Activated T-helper 2 cell treated with anti-CD3 and anti-CD28 coated beads, Interferon-gamma antibody, Interleukin-2, Interleukin-4, amounts not matched to agents 10 μg/mL and 5 μg/mL and 100 μg/mL, durations not matched to agents 14 hours and 24 hours and 36 hours (primary cell): ENCODE measurements at regions of chr11 and their contacts with region 1.

Region 1: GRCh38 chr11:42913731-42914130 is 398.1 kb upstream of the API5 start:
- DNase-seq: no peak
- H3K4me3 Mint-ChIP-seq: no peak overlapping the region
- H3K27ac Mint-ChIP-seq: no peak overlapping the region
- H3K4me1 Mint-ChIP-seq: no peaks in the 10 kb centered on the region
- H3K27me3 Mint-ChIP-seq: no peaks in the 10 kb centered on the region

Region 2: GRCh38 chr11:43072096-43072495 is 158.4 kb after region 1 on chr11:
- intact Hi-C with region 1: loop called (anchors 5 kb)
- DNase-seq: no peak
- H3K4me3 Mint-ChIP-seq: no peak overlapping the region
- H3K27ac Mint-ChIP-seq: no peak overlapping the region
- H3K4me1 Mint-ChIP-seq: no peaks in the 10 kb centered on the region
- H3K27me3 Mint-ChIP-seq: no peaks in the 10 kb centered on the region